Mammary epithelial cell (primary cell): ENCODE measurements at regions of chr9 and their contacts with region 1.

Region 1: DNA sequence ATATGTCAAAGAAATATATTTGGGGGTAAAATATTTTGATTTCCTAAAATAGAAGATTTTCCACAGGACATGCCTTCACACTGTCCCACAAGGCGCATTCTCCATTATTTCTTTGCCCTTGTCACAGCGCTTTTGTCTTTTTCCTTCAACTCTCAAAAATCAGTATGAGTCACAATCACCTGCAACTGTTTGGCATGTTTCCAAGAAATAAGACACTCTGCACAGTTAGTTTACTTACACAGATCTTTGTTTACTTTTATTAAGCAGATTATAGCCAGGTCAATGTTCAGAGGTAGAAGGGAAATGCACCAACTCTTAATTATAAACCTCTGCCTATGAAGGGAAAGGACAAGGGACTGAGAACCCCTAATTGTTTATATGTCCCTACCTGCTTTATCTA is 9.5 kb downstream of the CEMIP2 start:
- DNase-seq: peak; percentile 67
- H3K4me3 ChIP-seq: no peak overlapping the region
- H3K27ac ChIP-seq: no peak overlapping the region
- H3K4me1 ChIP-seq: peaks cover 51% of the 10 kb centered on the region
- H3K27me3 ChIP-seq: no peaks in the 10 kb centered on the region
- CTCF ChIP-seq: no peak

Region 2: GRCh38 chr9:71403106-71403505 is 355.7 kb before region 1 on chr9:
- CTCF ChIA-PET with region 1: interaction called, 10 read pairs
- dilution Hi-C with region 1: no loop called
- in situ Hi-C with region 1: no loop called
- intact Hi-C with region 1: no loop called
- DNase-seq: no peak
- H3K4me3 ChIP-seq: no peak overlapping the region
- H3K27ac ChIP-seq: no peak overlapping the region
- H3K4me1 ChIP-seq: no peaks in the 10 kb centered on the region
- H3K27me3 ChIP-seq: no peaks in the 10 kb centered on the region
- CTCF ChIP-seq: no peak

Region 3: DNA sequence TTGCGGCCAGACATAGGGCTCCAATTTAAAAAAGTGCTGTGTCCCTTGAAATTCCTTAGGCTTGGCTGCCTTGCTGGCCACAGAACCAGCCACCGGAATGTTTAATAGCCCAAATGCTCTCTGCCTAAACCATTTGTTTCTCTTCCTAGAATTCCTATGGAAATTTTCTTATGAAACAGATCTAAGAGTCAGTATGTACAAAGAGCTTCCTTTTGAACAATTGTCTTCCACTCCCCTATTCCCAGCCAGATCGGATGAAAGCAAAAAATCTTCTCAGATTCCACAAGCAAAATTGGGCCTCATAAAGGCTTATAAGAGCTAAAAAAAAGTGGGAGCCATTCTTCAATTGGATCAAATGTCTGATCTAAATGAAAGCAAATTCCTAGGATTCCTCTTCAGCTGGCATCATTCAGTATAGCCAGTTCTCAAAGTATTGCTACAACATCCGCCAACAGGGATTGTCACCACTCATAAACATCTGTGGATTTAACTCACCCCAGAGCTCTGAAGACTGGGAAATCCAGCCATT is 94.8 kb before region 1 on chr9:
- CTCF ChIA-PET with region 1: no interaction called
- dilution Hi-C with region 1: no loop called
- in situ Hi-C with region 1: no loop called
- intact Hi-C with region 1: no loop called
- DNase-seq: no peak
- H3K4me3 ChIP-seq: no peak overlapping the region
- H3K27ac ChIP-seq: no peak overlapping the region
- H3K4me1 ChIP-seq: peaks cover 4% of the 10 kb centered on the region
- H3K27me3 ChIP-seq: no peaks in the 10 kb centered on the region
- CTCF ChIP-seq: no peak

Region 4: DNA sequence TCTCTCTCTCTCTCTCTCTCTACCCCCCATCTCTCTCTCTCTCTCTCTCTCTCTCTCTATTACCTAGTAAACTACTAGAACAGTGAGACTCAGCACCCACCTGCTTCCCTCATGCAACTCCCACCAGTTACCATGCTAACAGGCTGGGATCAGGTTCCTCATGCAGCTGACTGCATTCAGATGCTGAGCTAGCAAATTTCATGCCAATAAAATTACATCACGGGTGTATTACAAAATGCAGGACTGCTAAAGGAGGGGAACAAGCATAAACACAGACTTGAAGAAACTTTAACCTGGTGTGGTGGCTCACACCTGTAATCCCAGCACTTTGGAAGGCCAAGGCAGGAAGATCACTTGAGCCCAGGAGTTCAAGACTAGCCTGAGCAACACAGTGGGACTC is 66.4 kb before region 1 on chr9:
- CTCF ChIA-PET with region 1: no interaction called
- dilution Hi-C with region 1: loop called (anchors 10 kb)
- in situ Hi-C with region 1: no loop called
- intact Hi-C with region 1: no loop called
- DNase-seq: peak; percentile 56
- H3K4me3 ChIP-seq: no peak overlapping the region
- H3K27ac ChIP-seq: no peak overlapping the region
- H3K4me1 ChIP-seq: peaks cover 16% of the 10 kb centered on the region
- H3K27me3 ChIP-seq: no peaks in the 10 kb centered on the region
- CTCF ChIP-seq: no peak